ENCODE measurements at regions of chr5 and their contacts with region 1.

Region 1: DNA sequence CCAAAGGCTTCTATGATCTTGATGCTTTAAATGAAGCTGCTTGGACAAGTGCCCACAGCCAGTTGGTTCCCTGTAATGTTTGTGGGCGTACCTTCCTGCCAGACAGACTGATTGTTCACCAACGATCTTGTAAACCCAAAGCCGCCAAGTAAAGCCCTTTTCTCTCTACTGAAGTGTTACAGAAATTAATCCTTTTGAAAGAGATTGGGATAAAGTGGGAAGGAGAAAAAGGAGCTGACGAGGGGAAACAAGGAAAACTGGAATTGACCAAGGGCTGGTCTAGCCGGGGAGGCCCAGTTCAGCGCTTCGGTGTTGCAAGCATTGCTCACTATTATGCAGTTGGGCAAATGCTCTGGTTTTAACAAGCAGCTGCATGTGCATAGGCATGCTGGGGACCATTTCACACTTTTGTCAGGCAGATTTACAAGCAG is 53.2 kb downstream of the ZNF474 start:
- DNase-seq: peak in 1 of 2 experiments; percentile 2
- H3K4me3 ChIP-seq: no peak overlapping the region
- H3K27ac ChIP-seq: no peak overlapping the region
- H3K4me1 ChIP-seq: no peaks in the 10 kb centered on the region
- H3K27me3 ChIP-seq: no peaks in the 10 kb centered on the region
- CTCF ChIP-seq: no peak

Region 2: GRCh38 chr5:122163121-122164069 is 19.1 kb before region 1 on chr5:
- CTCF ChIA-PET with region 1: no interaction called
- POLR2A ChIA-PET with region 1: no interaction called
- intact Hi-C with region 1: loop called (anchors 1 kb)
- DNase-seq: peak; percentile 7 to 68
- H3K4me3 ChIP-seq: no peak overlapping the region
- H3K27ac ChIP-seq: peak overlapping the region; percentile 80
- H3K4me1 ChIP-seq: peaks cover 23% of the 10 kb centered on the region
- H3K27me3 ChIP-seq: no peaks in the 10 kb centered on the region
- CTCF ChIP-seq: no peak

Measured in PC-9 (cell line).